ENCODE measurements at regions of chr22 and their contacts with region 1.

Region 1: GRCh38 chr22:26589845-26590736 is at the start of gene TPST2:
- H3K4me3 Mint-ChIP-seq: peak within 1 kb of the TSS; percentile 93
- H3K27ac Mint-ChIP-seq: peak within 1 kb of the TSS; percentile 92
- H3K4me1 Mint-ChIP-seq: peaks cover 63% of the 10 kb centered on the region
- H3K27me3 Mint-ChIP-seq: no peaks in the 10 kb centered on the region

Region 2: DNA sequence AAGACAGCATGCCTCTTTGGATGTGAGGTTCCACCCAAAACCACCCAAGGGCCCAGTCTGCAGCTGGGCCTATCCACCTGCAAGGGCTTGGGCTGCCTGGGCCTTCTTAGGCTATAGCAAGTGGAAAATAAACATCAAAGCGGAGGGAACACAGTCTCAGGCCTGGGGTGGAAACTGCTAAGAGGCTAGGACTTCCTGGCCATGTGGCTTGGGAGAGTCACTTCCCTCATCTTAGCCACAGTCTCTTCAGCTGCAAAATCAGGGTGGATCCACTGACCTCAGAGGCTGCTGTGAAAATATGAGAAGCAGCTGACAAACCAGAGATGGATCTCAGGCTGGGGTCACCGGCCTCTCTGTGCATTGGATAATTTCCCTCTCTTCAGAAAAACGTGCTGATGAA is 47.3 kb before region 1 on chr22:
- intact Hi-C with region 1: loop called (anchors 2 kb)
- H3K4me3 Mint-ChIP-seq: no peak overlapping the region
- H3K27ac Mint-ChIP-seq: peak overlapping the region; percentile 93
- H3K4me1 Mint-ChIP-seq: peaks cover 49% of the 10 kb centered on the region
- H3K27me3 Mint-ChIP-seq: no peaks in the 10 kb centered on the region

Region 3: DNA sequence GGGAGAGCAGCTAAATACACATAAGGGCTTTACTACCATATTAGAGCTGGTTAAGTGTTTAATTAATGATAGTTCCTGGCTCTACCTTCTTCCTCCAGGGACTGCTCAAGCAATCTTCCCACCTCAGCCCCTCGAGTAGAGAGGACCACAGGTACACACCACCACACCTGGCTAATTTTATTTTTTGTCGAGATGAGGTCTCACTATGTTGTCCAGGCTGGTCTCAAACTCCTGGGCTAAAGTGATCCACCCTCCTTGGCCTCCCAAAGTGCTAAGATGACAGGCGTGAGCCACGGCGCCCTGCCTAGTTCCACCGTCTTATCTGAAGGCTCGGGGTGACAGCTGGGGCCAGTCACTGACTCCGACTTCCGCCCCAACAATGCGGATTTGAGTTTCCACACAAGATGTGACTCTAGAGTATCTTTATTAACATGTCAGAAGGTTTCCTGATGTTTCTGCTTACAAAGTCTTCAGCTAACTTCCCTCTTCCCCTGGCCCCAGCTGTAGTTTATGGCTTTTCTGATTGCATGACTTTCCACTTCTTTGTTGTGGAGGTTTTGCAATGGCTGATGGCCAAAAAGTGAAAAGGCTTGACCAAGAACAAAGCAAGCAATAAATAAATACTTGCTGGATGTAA is 16.9 kb before region 1 on chr22:
- intact Hi-C with region 1: loop called (anchors 1 kb)
- H3K4me3 Mint-ChIP-seq: peak overlapping the region; percentile 60
- H3K27ac Mint-ChIP-seq: peak overlapping the region; percentile 87
- H3K4me1 Mint-ChIP-seq: peaks cover 70% of the 10 kb centered on the region
- H3K27me3 Mint-ChIP-seq: no peaks in the 10 kb centered on the region

Region 4: GRCh38 chr22:26648011-26648497 is 58.0 kb after region 1 on chr22:
- intact Hi-C with region 1: no loop called
- H3K4me3 Mint-ChIP-seq: peak overlapping the region; percentile 14
- H3K27ac Mint-ChIP-seq: peak overlapping the region; percentile 50
- H3K4me1 Mint-ChIP-seq: peaks cover 40% of the 10 kb centered on the region
- H3K27me3 Mint-ChIP-seq: peaks cover 8% of the 10 kb centered on the region

Region 5: DNA sequence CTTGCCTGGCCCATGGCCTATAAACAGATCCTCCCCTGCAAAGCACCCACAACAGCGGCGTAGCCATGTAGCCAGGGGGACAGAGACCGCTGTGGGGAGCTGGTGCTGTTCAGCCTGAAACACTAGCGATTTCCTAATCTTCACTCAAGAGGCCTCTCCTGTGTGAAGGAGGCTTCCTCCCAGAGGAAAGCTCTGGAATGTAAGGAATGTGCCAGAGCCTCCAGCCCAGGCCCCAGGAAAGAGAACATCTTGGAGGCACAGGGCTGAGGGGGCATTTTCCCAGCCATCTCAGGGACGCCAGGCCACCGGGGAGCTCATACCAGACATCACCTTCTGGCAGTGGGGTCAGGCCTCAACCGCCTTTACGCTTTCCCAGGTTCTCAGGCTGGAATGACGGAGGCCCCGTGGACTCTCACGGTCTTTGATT is 91.3 kb after region 1 on chr22:
- intact Hi-C with region 1: no loop called
- H3K4me3 Mint-ChIP-seq: no peak overlapping the region
- H3K27ac Mint-ChIP-seq: no peak overlapping the region
- H3K4me1 Mint-ChIP-seq: peaks cover 11% of the 10 kb centered on the region
- H3K27me3 Mint-ChIP-seq: no peaks in the 10 kb centered on the region

Measured in dendritic cell treated with granulocyte-macrophage colony-stimulating factor and Interleukin-4, amounts not matched to agents 40 ng/mL and 50 ng/mL, for 4 days (primary cell).